ENCODE measurements at regions of chr14 and their contacts with region 1.

Region 1: GRCh38 chr14:89040460-89041259 is 216.2 kb downstream of the TTC8 start:
- DNase-seq: peak; percentile 85 to 92 (median 90)
- ATAC-seq: peak; percentile 95
- H3K4me3 ChIP-seq: peak overlapping the region; percentile 8 to 34
- H3K27ac ChIP-seq: peak overlapping the region; percentile 83 to 86
- H3K4me1 ChIP-seq: peaks cover 9 to 16% of the 10 kb centered on the region in 2 donors
- H3K27me3 ChIP-seq: no peaks in the 10 kb centered on the region
- CTCF ChIP-seq: peak; percentile 90

Region 2: GRCh38 chr14:89767861-89768268 is 727.2 kb after region 1 on chr14:
- intact Hi-C with region 1: loop called in 1 of 2 experiments (anchors 5 kb)
- DNase-seq: peak in 1 of 4 donors; percentile 11
- ATAC-seq: peak; percentile 68
- H3K4me3 ChIP-seq: no peak overlapping the region
- H3K27ac ChIP-seq: no peak overlapping the region
- H3K4me1 ChIP-seq: peaks cover 0 to 5% of the 10 kb centered on the region in 2 donors
- H3K27me3 ChIP-seq: no peaks in the 10 kb centered on the region
- CTCF ChIP-seq: peak; percentile 30 to 32